ENCODE measurements at regions of chr12 and their contacts with region 1.

Region 1: DNA sequence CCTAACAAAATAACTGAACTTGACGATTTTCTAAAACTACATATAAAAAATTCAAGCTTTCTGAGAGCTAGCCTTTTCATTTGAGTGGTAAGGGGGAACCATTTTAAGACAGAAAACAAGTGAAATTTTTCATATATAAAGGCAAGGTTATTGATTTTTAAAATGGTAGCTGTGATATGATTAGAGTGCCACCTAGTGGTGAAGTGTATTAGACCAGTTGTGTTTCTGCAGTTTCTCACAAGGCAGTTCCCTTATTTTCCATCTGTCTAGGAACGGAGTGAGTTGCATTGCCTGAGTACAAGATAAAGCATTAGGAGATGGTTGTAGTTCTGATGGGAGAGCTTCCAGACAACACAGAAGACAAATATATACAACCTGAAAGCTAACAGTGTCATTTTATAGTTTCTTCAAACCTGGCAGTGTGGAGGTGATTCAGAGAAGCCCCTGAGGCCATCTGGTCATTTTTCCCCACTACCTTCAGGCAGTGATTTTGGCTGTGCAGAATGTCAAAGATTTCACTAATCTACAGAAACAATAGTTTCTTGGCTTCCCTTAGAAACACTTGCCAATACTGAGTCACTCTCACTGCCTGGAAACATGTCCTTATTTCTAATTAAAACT is 180.8 kb downstream of the C12orf50 start:
- DNase-seq: peak; percentile 31
- H3K4me3 ChIP-seq: no peak overlapping the region
- H3K27ac ChIP-seq: no peak overlapping the region; a peak in 1 of 4 replicates
- H3K4me1 ChIP-seq: peaks cover 0 to 2% of the 10 kb centered on the region in 2 experiments; a peak in 2 of 4 replicates
- H3K27me3 ChIP-seq: no peaks in the 10 kb centered on the region
- CTCF ChIP-seq: peak; percentile 92
- EP300 ChIP-seq: no peak
- RAD21 ChIP-seq: peak; percentile 93

Region 2: GRCh38 chr12:87274594-87275245 is 573.6 kb before region 1 on chr12:
- CTCF ChIA-PET with region 1: interaction called, 15 read pairs
- POLR2A ChIA-PET with region 1: no interaction called
- DNase-seq: peak; percentile 17
- H3K4me3 ChIP-seq: peak overlapping the region in 1 of 2 experiments; percentile 14; a peak in 1 of 4 replicates
- H3K27ac ChIP-seq: no peak overlapping the region
- H3K4me1 ChIP-seq: no peaks in the 10 kb centered on the region; a peak in 2 of 4 replicates
- H3K27me3 ChIP-seq: no peaks in the 10 kb centered on the region
- CTCF ChIP-seq: peak; percentile 72
- EP300 ChIP-seq: no peak
- RAD21 ChIP-seq: peak; percentile 65

Region 3: DNA sequence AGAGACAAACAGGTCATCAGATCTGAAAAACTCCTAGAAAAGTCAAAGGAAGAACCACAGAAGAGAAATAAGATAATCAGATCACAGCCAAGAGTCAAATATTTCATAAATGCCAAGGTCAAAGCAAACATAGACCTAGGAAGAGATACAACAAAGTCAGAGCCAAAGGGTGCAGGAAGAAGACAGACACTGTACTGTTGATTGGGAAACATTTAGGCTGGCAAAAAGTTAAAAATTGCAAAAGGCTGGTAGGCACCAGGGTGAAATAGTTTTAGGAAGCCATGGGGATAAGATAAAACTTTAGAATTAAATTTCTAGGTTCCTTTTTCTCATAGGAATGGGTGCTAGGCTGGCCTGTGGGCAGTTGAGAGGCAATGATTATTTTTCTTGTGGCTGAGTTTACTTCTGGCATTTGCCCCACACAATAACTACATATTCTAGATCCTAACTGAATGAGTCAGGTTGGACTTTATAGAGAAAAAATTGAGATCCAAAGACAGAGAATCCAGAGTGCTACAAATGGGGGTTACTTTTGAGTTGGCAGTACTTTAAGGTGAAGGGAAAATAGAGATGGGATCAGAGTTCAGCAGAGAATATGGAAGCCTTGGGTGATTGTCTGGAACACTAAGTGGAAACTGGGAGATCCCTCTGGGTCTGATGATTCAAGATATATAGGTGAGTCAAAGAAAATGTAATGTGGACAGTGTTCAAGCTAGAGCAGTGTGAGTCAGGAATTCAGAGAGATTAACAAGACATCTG is 34.7 kb before region 1 on chr12:
- CTCF ChIA-PET with region 1: no interaction called
- POLR2A ChIA-PET with region 1: no interaction called
- DNase-seq: no peak
- H3K4me3 ChIP-seq: no peak overlapping the region
- H3K27ac ChIP-seq: peak overlapping the region in 1 of 2 experiments; percentile 64; a peak in 2 of 4 replicates
- H3K4me1 ChIP-seq: peaks cover 0 to 14% of the 10 kb centered on the region in 2 experiments; a peak in 1 of 4 replicates
- H3K27me3 ChIP-seq: no peaks in the 10 kb centered on the region
- CTCF ChIP-seq: no peak
- EP300 ChIP-seq: no peak
- RAD21 ChIP-seq: no peak

Region 4: GRCh38 chr12:87836190-87836589 is 12.2 kb before region 1 on chr12:
- CTCF ChIA-PET with region 1: interaction called, 16 read pairs
- POLR2A ChIA-PET with region 1: no interaction called
- DNase-seq: peak; percentile 8
- H3K4me3 ChIP-seq: no peak overlapping the region
- H3K27ac ChIP-seq: no peak overlapping the region
- H3K4me1 ChIP-seq: no peaks in the 10 kb centered on the region; a peak in 1 of 4 replicates
- H3K27me3 ChIP-seq: no peaks in the 10 kb centered on the region
- CTCF ChIP-seq: no peak
- EP300 ChIP-seq: peak in 1 of 2 experiments; percentile 76; a peak in 1 of 4 replicates
- RAD21 ChIP-seq: no peak

Region 5: DNA sequence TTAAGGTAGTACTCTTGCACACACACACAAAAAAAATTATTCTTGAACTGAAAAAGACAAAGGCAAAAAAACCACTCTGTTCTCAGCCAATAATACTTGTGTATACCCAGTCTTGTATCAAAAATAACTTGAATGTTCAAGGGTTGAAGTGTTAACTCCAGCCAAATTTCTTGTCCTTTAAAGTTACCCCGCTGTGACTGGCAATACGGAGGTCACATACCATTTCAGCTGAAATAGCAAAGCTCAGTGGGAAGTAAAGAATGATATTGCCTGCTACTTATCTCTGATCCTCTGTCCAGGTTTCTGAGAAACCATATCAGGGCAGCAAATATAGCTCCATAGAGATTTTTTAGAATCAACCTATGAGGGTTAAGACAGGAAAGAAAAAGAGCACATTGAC is 13.4 kb after region 1 on chr12:
- CTCF ChIA-PET with region 1: interaction called, 23 read pairs
- POLR2A ChIA-PET with region 1: no interaction called
- DNase-seq: no peak
- H3K4me3 ChIP-seq: no peak overlapping the region
- H3K27ac ChIP-seq: peak overlapping the region in 1 of 2 experiments; percentile 9; a peak in 1 of 4 replicates
- H3K4me1 ChIP-seq: peaks cover 0 to 3% of the 10 kb centered on the region in 2 experiments; a peak in 2 of 4 replicates
- H3K27me3 ChIP-seq: no peaks in the 10 kb centered on the region
- CTCF ChIP-seq: no peak
- EP300 ChIP-seq: no peak
- RAD21 ChIP-seq: no peak

Measured in SK-N-SH (cell line).